ENCODE measurements at regions of chr2 and their contacts with region 1.

Region 1: DNA sequence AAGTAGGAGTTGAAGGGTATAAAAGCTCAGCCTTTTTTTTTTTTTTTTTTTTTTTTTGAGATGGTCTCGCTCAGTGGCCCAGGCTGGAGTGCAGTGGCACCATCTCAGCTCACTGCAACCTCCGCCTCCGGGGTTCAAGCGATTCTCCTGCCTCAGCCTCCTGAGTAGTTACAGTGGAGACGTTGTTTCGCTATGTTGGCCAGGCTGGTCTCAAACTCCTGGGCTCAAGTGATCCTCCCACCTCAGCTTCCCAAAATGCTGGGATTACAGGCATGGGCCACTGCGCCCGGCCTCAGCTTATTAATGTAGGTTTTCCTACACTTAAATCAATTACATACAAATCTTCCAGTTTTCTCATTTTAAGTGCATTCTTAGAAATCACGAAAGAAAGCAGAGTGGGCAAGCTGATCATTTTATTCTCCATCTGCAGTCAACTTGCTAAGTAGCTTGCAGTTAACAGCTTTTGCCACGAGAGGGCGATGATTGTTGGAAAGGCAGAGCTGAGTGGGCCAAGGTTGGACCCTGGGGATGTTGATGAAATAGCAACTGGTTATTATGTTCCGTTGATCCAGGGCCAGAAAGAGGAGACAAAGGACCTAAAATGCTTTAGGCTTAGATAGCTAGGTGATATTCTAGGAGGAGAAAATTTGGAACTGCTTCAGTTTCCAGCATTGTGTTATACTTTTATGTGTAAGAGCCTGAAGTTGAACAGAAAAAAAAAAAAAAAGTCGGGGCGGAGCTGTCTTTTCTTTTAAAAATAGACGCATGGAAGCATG is 234.4 kb upstream of the EPAS1 start:
- DNase-seq: peak; percentile 89
- ATAC-seq: peak; percentile 81 to 86

Region 2: GRCh38 chr2:46020416-46020815 is 42.4 kb before region 1 on chr2:
- intact Hi-C with region 1: loop called in 1 of 2 experiments (anchors 5 kb)
- DNase-seq: no peak
- ATAC-seq: no peak

Region 3: DNA sequence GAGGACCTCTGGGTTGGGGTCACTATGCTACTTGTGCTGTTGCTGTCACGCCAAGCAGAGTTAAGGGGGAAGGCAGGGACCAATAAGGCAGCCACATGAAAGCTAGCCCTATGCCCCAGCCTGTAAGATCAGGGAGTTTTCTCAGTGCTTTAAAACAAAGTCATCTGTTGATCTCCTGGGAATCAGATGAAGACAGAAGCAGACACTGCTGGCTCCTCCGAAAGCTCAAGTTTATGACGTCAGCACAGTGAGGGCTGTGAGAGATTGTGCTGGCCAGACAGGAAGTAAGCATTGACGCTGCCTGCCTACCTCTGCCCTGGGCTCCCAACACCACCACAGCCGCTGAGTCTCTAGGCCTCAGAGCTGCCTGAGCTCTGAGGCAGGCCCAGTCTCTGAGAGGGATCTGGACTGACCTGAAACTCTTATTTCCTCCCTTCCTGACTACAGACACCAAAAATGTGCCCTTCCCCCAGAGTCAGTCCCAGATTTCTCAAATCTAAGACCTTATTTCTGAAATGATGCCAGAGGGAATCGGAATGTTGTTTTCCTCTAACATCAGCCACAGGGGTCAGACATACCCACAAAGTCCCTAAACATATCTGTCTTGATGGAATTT is 116.3 kb after region 1 on chr2:
- intact Hi-C with region 1: loop called in 1 of 2 experiments (anchors 10 kb)
- DNase-seq: peak; percentile 80
- ATAC-seq: peak; percentile 92 to 94